ENCODE measurements at regions of chr1 and their contacts with region 1.

Region 1: GRCh38 chr1:52404116-52404986 is at the starts of genes ORC1 and PRPF38A:
- DNase-seq: peak; percentile 99
- ATAC-seq: peak; percentile 92
- H3K4me3 Mint-ChIP-seq: peak within 1 kb of the TSS; percentile 100
- H3K27ac Mint-ChIP-seq: peak within 1 kb of the TSS; percentile 100
- H3K4me1 Mint-ChIP-seq: peaks cover 54% of the 10 kb centered on the region
- H3K27me3 Mint-ChIP-seq: no peaks in the 10 kb centered on the region
- total RNA-seq, gene ORC1: 38.3 to 38.4 TPM
- total RNA-seq, gene PRPF38A: 102 to 104 TPM

Region 2: DNA sequence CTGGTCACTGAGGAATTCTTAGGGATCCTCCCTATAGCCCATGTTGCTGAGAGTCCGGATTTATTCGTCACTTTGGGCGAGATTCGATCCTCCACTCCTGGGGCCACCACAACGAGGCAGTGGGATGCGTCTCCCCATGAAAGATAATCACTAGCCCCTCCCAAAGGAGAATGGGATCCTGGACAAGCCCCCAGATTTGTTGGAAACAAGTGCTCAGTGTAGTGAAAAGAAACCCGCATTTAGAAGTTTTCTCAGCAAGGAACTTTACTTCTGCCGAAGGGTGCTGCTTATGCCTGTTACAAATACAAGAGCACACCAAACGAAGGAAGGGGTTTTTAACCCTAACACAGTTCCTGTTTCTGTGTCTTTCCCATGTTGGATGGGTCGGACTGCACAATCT is 179.2 kb before region 1 on chr1:
- CTCF ChIA-PET with region 1: no interaction called
- POLR2A ChIA-PET with region 1: no interaction called
- DNase-seq: no peak
- ATAC-seq: no peak
- H3K4me3 Mint-ChIP-seq: no peak overlapping the region
- H3K27ac Mint-ChIP-seq: no peak overlapping the region
- H3K4me1 Mint-ChIP-seq: no peaks in the 10 kb centered on the region
- H3K27me3 Mint-ChIP-seq: no peaks in the 10 kb centered on the region

Region 3: DNA sequence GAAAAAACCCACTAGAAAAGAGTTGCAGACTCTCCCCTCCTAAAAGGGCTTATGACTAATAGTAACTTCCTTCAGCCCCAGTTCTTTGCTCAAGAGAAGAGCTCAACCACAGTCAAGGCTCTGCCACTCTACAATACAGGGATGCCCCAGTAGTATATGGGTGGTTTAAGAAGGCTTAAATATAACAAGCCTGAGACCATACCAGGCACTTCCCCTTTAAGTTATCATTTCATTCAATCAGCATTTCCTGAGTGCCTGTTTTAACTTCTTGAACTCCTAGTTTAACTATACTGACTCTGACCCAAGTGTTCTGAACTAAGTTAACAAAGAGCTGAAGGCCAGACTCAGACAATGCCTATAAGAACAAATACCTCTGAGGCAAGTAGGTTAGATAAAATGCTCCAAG is 19.9 kb after region 1 on chr1:
- CTCF ChIA-PET with region 1: interaction called, 10 read pairs
- POLR2A ChIA-PET with region 1: interaction called, 43 read pairs
- DNase-seq: peak; percentile 49
- ATAC-seq: peak; percentile 89
- H3K4me3 Mint-ChIP-seq: peak overlapping the region; percentile 61
- H3K27ac Mint-ChIP-seq: peak overlapping the region; percentile 94
- H3K4me1 Mint-ChIP-seq: peaks cover 43% of the 10 kb centered on the region
- H3K27me3 Mint-ChIP-seq: no peaks in the 10 kb centered on the region

Region 4: DNA sequence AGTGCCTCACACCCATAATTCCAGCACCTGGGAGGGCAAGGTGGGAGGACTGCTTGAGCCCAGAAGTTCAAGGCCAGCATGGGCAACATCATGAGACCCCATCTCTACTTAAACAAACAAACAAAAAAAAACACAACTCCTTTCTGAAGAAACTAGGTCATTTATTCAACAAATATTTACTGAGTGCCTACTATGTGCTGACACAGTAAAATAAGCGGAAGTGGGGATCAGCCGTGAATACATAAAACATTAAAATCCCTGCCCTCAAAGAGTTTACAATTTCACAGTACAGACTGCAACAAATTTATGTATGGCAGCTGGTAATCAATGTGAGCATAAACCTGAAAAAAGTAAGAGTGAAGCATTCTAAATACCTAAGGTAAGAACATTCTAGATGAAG is 83.3 kb after region 1 on chr1:
- CTCF ChIA-PET with region 1: no interaction called
- POLR2A ChIA-PET with region 1: no interaction called
- DNase-seq: no peak
- ATAC-seq: no peak
- H3K4me3 Mint-ChIP-seq: no peak overlapping the region
- H3K27ac Mint-ChIP-seq: peak overlapping the region; percentile 40
- H3K4me1 Mint-ChIP-seq: no peaks in the 10 kb centered on the region
- H3K27me3 Mint-ChIP-seq: no peaks in the 10 kb centered on the region

Region 5: GRCh38 chr1:52636721-52637695 is 232.7 kb after region 1 on chr1:
- CTCF ChIA-PET with region 1: interaction called, 3 read pairs
- POLR2A ChIA-PET with region 1: interaction called, 21 read pairs
- DNase-seq: peak; percentile 84
- ATAC-seq: peak; percentile 68
- H3K4me3 Mint-ChIP-seq: peak overlapping the region; percentile 59
- H3K27ac Mint-ChIP-seq: peak overlapping the region; percentile 97
- H3K4me1 Mint-ChIP-seq: peaks cover 76% of the 10 kb centered on the region
- H3K27me3 Mint-ChIP-seq: no peaks in the 10 kb centered on the region

Region 6: GRCh38 chr1:52665006-52665941 is 260.9 kb after region 1 on chr1:
- CTCF ChIA-PET with region 1: interaction called, 18 read pairs
- POLR2A ChIA-PET with region 1: interaction called, 10 read pairs
- DNase-seq: no peak
- ATAC-seq: no peak
- H3K4me3 Mint-ChIP-seq: no peak overlapping the region
- H3K27ac Mint-ChIP-seq: peak overlapping the region; percentile 22
- H3K4me1 Mint-ChIP-seq: peaks cover 3% of the 10 kb centered on the region
- H3K27me3 Mint-ChIP-seq: no peaks in the 10 kb centered on the region